ENCODE measurements at regions of chr3 and their contacts with region 1.

Region 1: GRCh38 chr3:125374996-125375941 is at the start of gene ZNF148:
- DNase-seq: peak; percentile 84
- ATAC-seq: peak; percentile 95
- H3K4me3 ChIP-seq: peak within 1 kb of the TSS; percentile 98
- H3K27ac ChIP-seq: peak within 1 kb of the TSS; percentile 99
- H3K4me1 ChIP-seq: peaks cover 5% of the 10 kb centered on the region
- H3K27me3 ChIP-seq: no peaks in the 10 kb centered on the region
- CTCF ChIP-seq: 0 out of 2 replicates have a peak, but pooled peaks have one; percentile 11
- POLR2A ChIP-seq: peak; percentile 84
- RAD21 ChIP-seq: no peak
- total RNA-seq, gene ZNF148: 57.8 and 65.2 TPM in 2 replicates

Region 2: GRCh38 chr3:125353128-125353527 is 22.1 kb before region 1 on chr3:
- CTCF ChIA-PET with region 1: interaction called, 10 read pairs
- POLR2A ChIA-PET with region 1: no interaction called
- dilution Hi-C with region 1: no loop called
- in situ Hi-C with region 1: no loop called
- intact Hi-C with region 1: no loop called
- DNase-seq: no peak
- ATAC-seq: no peak
- H3K4me3 ChIP-seq: no peak overlapping the region
- H3K27ac ChIP-seq: no peak overlapping the region
- H3K4me1 ChIP-seq: peaks cover 4% of the 10 kb centered on the region; the same call in 1 of the 2 replicates
- H3K27me3 ChIP-seq: no peaks in the 10 kb centered on the region
- CTCF ChIP-seq: no peak
- POLR2A ChIP-seq: no peak
- RAD21 ChIP-seq: no peak

Region 3: GRCh38 chr3:126567696-126568438 is 1192.6 kb after region 1 on chr3:
- CTCF ChIA-PET with region 1: no interaction called
- POLR2A ChIA-PET with region 1: no interaction called
- dilution Hi-C with region 1: no loop called
- in situ Hi-C with region 1: no loop called
- intact Hi-C with region 1: no loop called
- DNase-seq: no peak
- ATAC-seq: peak; percentile 46; the same call in 1 of the 2 replicates
- H3K4me3 ChIP-seq: no peak overlapping the region
- H3K27ac ChIP-seq: no peak overlapping the region
- H3K4me1 ChIP-seq: no peaks in the 10 kb centered on the region
- H3K27me3 ChIP-seq: peaks cover 33% of the 10 kb centered on the region
- CTCF ChIP-seq: no peak
- POLR2A ChIP-seq: no peak
- RAD21 ChIP-seq: no peak

Measured in IMR-90 (cell line).